Body of pancreas (tissue), 4 donors: ENCODE measurements at regions of chr17 and their contacts with region 1.

Region 1: GRCh38 chr17:12744298-12744697 is 45.0 kb upstream of the ARHGAP44 start:
- DNase-seq: no peak
- ATAC-seq: peak; percentile 41
- H3K4me3 ChIP-seq: no peak overlapping the region
- H3K27ac ChIP-seq: peak overlapping the region in 1 of 4 donors; percentile 30
- H3K4me1 ChIP-seq: peaks cover 25% of the 10 kb centered on the region
- H3K27me3 ChIP-seq: no peaks in the 10 kb centered on the region
- CTCF ChIP-seq: no peak
- POLR2A ChIP-seq: no peak

Region 2: GRCh38 chr17:12545877-12546513 is 198.3 kb before region 1 on chr17:
- intact Hi-C with region 1: loop called (anchors 10 kb)
- DNase-seq: peak; percentile 31 to 49 (median 36)
- ATAC-seq: peak; percentile 64
- H3K4me3 ChIP-seq: no peak overlapping the region
- H3K27ac ChIP-seq: no peak overlapping the region
- H3K4me1 ChIP-seq: no peaks in the 10 kb centered on the region
- H3K27me3 ChIP-seq: no peaks in the 10 kb centered on the region
- CTCF ChIP-seq: peak; percentile 25 to 72 (median 67)
- POLR2A ChIP-seq: no peak

Region 3: GRCh38 chr17:12794919-12795532 is 50.7 kb after region 1 on chr17:
- intact Hi-C with region 1: no loop called
- DNase-seq: no peak
- ATAC-seq: no peak
- H3K4me3 ChIP-seq: no peak overlapping the region
- H3K27ac ChIP-seq: no peak overlapping the region
- H3K4me1 ChIP-seq: peaks cover 8% of the 10 kb centered on the region
- H3K27me3 ChIP-seq: no peaks in the 10 kb centered on the region
- CTCF ChIP-seq: no peak
- POLR2A ChIP-seq: no peak